MCF 10A (cell line): ENCODE measurements at regions of chr5 and their contacts with region 1.

Region 1: GRCh38 chr5:95846554-95847260 is 24.2 kb upstream of the GLRX start:
- DNase-seq: peak; percentile 84
- H3K4me3 Mint-ChIP-seq: no peak overlapping the region
- H3K27ac Mint-ChIP-seq: no peak overlapping the region
- H3K4me1 Mint-ChIP-seq: peaks cover 32% of the 10 kb centered on the region
- H3K27me3 Mint-ChIP-seq: no peaks in the 10 kb centered on the region
- CTCF ChIP-seq: peak; percentile 91

Region 2: DNA sequence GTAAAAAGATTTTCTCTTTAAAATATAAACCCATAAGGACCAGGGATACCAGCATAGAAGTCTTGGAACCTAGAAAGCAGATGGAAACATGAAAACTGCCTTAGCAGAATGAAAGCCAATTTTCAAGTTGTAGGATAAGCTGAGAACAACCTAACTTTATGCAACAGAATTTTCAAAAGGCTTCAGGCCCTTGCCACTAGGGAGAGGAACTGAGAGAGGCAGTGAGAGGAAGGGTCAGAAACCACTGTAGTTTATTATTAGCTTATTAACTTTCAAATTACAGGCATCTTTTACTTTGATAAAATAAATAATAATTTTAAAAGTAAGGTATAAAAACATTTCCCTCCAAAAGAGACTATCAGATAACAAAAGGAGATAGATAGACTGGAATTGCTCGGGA is 422.2 kb before region 1 on chr5:
- CTCF ChIA-PET with region 1: no interaction called
- POLR2A ChIA-PET with region 1: no interaction called
- intact Hi-C with region 1: no loop called
- DNase-seq: no peak
- H3K4me3 Mint-ChIP-seq: no peak overlapping the region
- H3K27ac Mint-ChIP-seq: no peak overlapping the region
- H3K4me1 Mint-ChIP-seq: no peaks in the 10 kb centered on the region
- H3K27me3 Mint-ChIP-seq: no peaks in the 10 kb centered on the region
- CTCF ChIP-seq: no peak

Region 3: DNA sequence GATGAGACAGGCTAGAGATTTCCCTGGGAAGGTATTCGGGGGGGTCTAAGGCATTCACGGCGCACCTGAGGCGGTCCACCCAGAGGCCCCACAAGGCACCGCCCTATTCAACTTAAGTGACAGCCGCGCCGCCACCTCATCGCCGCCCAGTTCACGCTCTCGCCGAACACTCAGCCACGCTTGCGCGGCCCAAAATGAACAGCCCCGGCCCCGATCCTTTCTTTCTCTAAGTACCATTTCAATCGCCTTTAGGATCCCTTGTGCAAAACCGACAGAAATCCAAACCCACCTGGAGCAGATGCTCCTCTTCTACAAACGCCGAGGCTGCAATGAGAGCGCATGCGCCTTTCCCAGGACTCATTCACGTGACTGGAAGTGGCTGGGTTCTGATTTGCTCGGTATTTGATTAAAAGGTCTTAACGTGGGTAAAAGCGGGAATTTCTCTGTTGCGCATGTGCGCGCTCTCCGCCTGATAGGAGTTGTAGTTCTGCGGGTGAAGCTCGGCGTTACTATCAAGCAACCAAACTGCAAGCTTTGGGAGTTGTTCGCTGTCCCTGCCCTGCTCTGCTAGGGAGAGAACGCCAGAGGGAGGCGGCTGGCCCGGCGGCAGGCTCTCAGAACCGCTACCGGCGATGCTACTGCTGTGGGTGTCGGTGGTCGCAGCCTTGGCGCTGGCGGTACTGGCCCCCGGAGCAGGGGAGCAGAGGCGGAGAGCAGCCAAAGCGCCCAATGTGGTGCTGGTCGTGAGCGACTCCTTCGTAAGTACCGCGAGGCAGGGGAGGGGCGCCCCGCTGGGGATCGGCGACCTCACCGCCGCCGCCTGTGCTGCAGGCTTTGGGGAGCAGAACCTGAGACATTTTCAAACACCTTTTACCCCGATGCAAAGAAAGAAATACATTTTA is 291.8 kb before region 1 on chr5 and contains the starts of genes ARSK and SKIC3:
- CTCF ChIA-PET with region 1: no interaction called
- POLR2A ChIA-PET with region 1: no interaction called
- intact Hi-C with region 1: loop called (anchors 2 kb)
- DNase-seq: peak; percentile 99
- H3K4me3 Mint-ChIP-seq: peak within 1 kb of the TSS; percentile 88
- H3K27ac Mint-ChIP-seq: peak within 1 kb of the TSS; percentile 74
- H3K4me1 Mint-ChIP-seq: peaks cover 26% of the 10 kb centered on the region
- H3K27me3 Mint-ChIP-seq: no peaks in the 10 kb centered on the region
- CTCF ChIP-seq: no peak
- total RNA-seq, gene ARSK: 3.6 and 5.4 TPM in 2 replicates
- total RNA-seq, gene SKIC3: 97.2 and 105 TPM in 2 replicates

Region 4: GRCh38 chr5:95664204-95664786 is 182.4 kb before region 1 on chr5:
- CTCF ChIA-PET with region 1: interaction called, 86 read pairs
- POLR2A ChIA-PET with region 1: interaction called, 4 read pairs
- intact Hi-C with region 1: loop called (anchors 1 kb)
- DNase-seq: peak; percentile 46
- H3K4me3 Mint-ChIP-seq: no peak overlapping the region
- H3K27ac Mint-ChIP-seq: no peak overlapping the region
- H3K4me1 Mint-ChIP-seq: no peaks in the 10 kb centered on the region
- H3K27me3 Mint-ChIP-seq: no peaks in the 10 kb centered on the region
- CTCF ChIP-seq: peak; percentile 56

Region 5: DNA sequence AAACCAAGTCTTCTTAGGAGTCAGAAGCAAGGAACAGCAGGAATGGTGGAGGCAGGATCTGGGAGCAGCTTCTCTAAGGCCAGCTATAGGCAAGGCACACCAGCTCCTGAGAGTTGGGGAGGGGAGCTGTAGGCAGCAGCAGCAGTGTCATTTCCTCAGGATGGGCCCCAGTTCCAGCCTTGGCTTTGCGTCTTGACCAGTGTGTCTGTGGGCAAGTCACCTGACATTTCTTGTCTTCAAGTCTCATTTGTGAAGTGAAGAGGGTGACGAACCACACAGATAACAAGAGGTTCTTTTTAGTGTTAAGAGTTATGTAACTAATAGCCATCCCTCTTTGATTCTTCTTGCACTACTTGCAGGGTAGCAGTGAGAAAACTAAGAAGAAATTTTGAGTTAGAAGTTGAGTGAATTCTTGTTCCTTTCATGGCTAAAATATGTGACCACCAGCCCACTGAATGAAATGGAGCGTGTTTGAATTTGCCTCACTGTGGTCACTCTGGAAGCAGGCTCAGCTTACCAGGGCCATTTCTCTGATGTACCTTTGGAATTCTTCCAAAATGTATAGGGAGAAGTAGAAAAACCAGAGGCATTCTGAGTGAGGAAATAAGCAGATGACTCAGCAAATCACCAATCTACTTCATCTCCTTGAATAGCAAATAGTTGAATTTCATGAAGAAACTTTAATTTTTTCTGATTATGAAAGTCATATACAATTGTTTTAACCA is 73.2 kb before region 1 on chr5:
- CTCF ChIA-PET with region 1: interaction called, 22 read pairs
- POLR2A ChIA-PET with region 1: no interaction called
- intact Hi-C with region 1: no loop called
- DNase-seq: peak; percentile 83
- H3K4me3 Mint-ChIP-seq: no peak overlapping the region
- H3K27ac Mint-ChIP-seq: no peak overlapping the region
- H3K4me1 Mint-ChIP-seq: peaks cover 13% of the 10 kb centered on the region
- H3K27me3 Mint-ChIP-seq: no peaks in the 10 kb centered on the region
- CTCF ChIP-seq: no peak

Region 6: GRCh38 chr5:95822542-95823181 is 24.0 kb before region 1 on chr5 and contains the start of gene GLRX:
- CTCF ChIA-PET with region 1: interaction called, 50 read pairs
- POLR2A ChIA-PET with region 1: interaction called, 55 read pairs
- intact Hi-C with region 1: loop called (anchors 1 kb)
- DNase-seq: peak; percentile 93
- H3K4me3 Mint-ChIP-seq: peak within 1 kb of the TSS; percentile 95
- H3K27ac Mint-ChIP-seq: peak within 1 kb of the TSS; percentile 92
- H3K4me1 Mint-ChIP-seq: peaks cover 42% of the 10 kb centered on the region
- H3K27me3 Mint-ChIP-seq: no peaks in the 10 kb centered on the region
- CTCF ChIP-seq: no peak
- total RNA-seq, gene GLRX: 41.4 and 59.2 TPM in 2 replicates